ENCODE measurements at regions of chrX and their contacts with region 1.

Region 1: GRCh38 chrX:43436517-43436916 is 219.6 kb upstream of the MAOA start:
- DNase-seq: no peak
- ATAC-seq: no peak
- H3K4me3 ChIP-seq: no peak overlapping the region
- H3K27ac ChIP-seq: no peak overlapping the region
- H3K4me1 ChIP-seq: no peaks in the 10 kb centered on the region
- H3K27me3 ChIP-seq: no peaks in the 10 kb centered on the region
- CTCF ChIP-seq: no peak

Region 2: DNA sequence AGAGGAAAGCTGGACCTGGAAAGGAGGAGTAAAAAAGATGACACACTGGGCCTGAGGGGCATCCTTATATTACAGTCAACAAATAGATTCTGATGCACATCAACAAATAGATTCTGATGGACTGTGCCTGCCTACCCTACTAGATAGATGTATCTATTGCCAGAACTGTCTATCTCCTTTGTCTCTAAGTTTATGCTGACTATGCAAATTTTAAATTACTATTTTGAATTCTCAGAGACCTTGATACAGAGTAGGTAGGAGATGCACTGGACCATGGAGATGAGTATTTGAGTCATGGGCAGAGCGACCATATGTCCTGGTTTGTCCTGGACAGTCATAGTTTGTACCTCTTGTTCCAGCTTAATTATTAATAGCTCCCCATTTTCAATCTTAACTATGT is 410.7 kb before region 1 on chrX:
- intact Hi-C with region 1: loop called in 1 of 3 experiments (anchors 10 kb)
- DNase-seq: no peak
- ATAC-seq: no peak
- H3K4me3 ChIP-seq: no peak overlapping the region
- H3K27ac ChIP-seq: no peak overlapping the region
- H3K4me1 ChIP-seq: no peaks in the 10 kb centered on the region
- H3K27me3 ChIP-seq: peaks cover 0 to 4% (median 0%) of the 10 kb centered on the region in 4 donors
- CTCF ChIP-seq: no peak

Region 3: DNA sequence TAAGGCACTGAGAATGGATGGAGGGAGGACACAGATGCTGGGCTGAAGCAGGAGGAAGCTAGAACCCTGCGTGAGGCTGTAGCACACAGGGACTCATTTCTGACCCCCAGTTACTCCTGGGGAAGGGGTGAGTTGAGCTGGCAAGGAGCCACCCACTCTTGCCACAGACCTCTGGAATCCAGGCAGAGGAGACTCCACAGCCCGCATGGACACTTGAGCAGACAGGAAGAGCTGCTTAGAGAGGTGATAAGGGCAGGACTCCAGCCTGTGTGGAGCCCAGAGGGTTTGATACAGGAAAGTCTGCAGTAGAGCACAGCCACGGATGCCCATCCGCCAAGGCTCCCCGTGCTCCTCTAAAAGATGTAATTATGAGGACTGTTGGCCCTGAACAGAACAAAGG is 49.8 kb after region 1 on chrX:
- intact Hi-C with region 1: no loop called
- DNase-seq: peak in 1 of 6 donors; percentile 23
- ATAC-seq: no peak
- H3K4me3 ChIP-seq: no peak overlapping the region
- H3K27ac ChIP-seq: no peak overlapping the region
- H3K4me1 ChIP-seq: no peaks in the 10 kb centered on the region
- H3K27me3 ChIP-seq: peaks cover 0 to 37% (median 5%) of the 10 kb centered on the region in 4 donors
- CTCF ChIP-seq: no peak